ENCODE measurements at regions of chr9 and their contacts with region 1.

Region 1: GRCh38 chr9:37852222-37852621 is 51.6 kb downstream of the DCAF10 start:
- DNase-seq: no peak
- H3K4me3 ChIP-seq: no peak overlapping the region
- H3K27ac ChIP-seq: no peak overlapping the region
- H3K4me1 ChIP-seq: no peaks in the 10 kb centered on the region
- H3K27me3 ChIP-seq: no peaks in the 10 kb centered on the region
- CTCF ChIP-seq: no peak

Region 2: GRCh38 chr9:38244951-38245350 is 392.7 kb after region 1 on chr9:
- CTCF ChIA-PET with region 1: no interaction called
- POLR2A ChIA-PET with region 1: interaction called, 14 read pairs
- intact Hi-C with region 1: no loop called
- DNase-seq: peak in 1 of 2 experiments; percentile 62
- H3K4me3 ChIP-seq: no peak overlapping the region
- H3K27ac ChIP-seq: no peak overlapping the region
- H3K4me1 ChIP-seq: peaks cover 7% of the 10 kb centered on the region; the same call in 1 of the 2 replicates
- H3K27me3 ChIP-seq: no peaks in the 10 kb centered on the region
- CTCF ChIP-seq: no peak

Measured in PC-9 (cell line).